Heart right ventricle (tissue), 16 donors: ENCODE measurements at regions of chr6 and their contacts with region 1.

Region 1: GRCh38 chr6:11172501-11173332 is 59.8 kb downstream of the NEDD9 start:
- DNase-seq: peak; percentile 65 to 73
- ATAC-seq: peak in 7 of 8 donors; percentile 44 to 85 (median 67)
- H3K4me3 ChIP-seq: peak overlapping the region in 1 of 10 donors; percentile 19
- H3K27ac ChIP-seq: peak overlapping the region in 1 of 10 donors; percentile 13
- H3K4me1 ChIP-seq: peaks cover 0 to 27% (median 9%) of the 10 kb centered on the region in 9 donors
- H3K27me3 ChIP-seq: no peaks in the 10 kb centered on the region
- CTCF ChIP-seq: peak; percentile 73 to 92 (median 86)

Region 2: DNA sequence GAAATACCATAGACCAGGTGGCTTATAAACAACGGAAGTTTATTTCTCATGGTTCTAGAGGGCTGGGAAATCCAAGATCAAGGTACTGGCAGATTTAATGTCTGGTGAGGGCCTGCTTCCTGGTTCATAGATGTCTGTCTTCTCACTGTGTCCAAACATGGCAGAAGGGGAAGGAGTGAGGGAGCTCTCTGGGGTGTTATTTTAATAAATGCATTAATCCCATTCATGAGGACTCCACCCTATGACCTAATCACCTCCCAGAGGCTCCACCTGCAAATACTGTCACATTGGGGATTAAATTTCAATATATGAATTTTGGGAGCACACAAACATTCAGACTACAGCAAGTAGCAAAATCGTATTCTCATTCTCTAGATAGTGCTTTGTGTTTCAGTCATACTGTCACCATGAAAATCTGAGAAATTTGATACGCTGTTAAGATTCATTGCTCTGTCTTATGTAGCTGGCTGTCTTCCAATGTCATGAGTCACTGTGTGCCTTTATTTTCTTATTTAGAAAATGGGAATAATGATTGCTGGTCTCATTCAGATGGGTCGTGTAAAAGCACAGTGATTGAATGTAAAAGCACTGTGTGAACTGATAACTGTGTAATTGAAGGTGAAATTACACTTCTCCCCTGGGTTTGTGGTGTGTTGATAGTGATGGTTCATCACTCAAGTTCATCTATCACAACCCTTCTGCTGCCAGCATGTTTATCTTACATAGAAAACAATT is 52.3 kb before region 1 on chr6:
- intact Hi-C with region 1: no loop called
- DNase-seq: no peak
- ATAC-seq: no peak
- H3K4me3 ChIP-seq: no peak overlapping the region
- H3K27ac ChIP-seq: no peak overlapping the region
- H3K4me1 ChIP-seq: peaks cover 0 to 34% (median 17%) of the 10 kb centered on the region in 9 donors
- H3K27me3 ChIP-seq: no peaks in the 10 kb centered on the region
- CTCF ChIP-seq: no peak

Region 3: GRCh38 chr6:11241793-11242201 is 69.1 kb after region 1 on chr6:
- intact Hi-C with region 1: loop called in 3 of 10 experiments (anchors 5 to 10 kb)
- DNase-seq: peak; percentile 67 to 73
- ATAC-seq: peak; percentile 80 to 95 (median 90)
- H3K4me3 ChIP-seq: no peak overlapping the region
- H3K27ac ChIP-seq: peak overlapping the region in 1 of 10 donors; percentile 4
- H3K4me1 ChIP-seq: peaks cover 0 to 27% (median 8%) of the 10 kb centered on the region in 9 donors
- H3K27me3 ChIP-seq: no peaks in the 10 kb centered on the region
- CTCF ChIP-seq: peak; percentile 26 to 77 (median 54)

Region 4: DNA sequence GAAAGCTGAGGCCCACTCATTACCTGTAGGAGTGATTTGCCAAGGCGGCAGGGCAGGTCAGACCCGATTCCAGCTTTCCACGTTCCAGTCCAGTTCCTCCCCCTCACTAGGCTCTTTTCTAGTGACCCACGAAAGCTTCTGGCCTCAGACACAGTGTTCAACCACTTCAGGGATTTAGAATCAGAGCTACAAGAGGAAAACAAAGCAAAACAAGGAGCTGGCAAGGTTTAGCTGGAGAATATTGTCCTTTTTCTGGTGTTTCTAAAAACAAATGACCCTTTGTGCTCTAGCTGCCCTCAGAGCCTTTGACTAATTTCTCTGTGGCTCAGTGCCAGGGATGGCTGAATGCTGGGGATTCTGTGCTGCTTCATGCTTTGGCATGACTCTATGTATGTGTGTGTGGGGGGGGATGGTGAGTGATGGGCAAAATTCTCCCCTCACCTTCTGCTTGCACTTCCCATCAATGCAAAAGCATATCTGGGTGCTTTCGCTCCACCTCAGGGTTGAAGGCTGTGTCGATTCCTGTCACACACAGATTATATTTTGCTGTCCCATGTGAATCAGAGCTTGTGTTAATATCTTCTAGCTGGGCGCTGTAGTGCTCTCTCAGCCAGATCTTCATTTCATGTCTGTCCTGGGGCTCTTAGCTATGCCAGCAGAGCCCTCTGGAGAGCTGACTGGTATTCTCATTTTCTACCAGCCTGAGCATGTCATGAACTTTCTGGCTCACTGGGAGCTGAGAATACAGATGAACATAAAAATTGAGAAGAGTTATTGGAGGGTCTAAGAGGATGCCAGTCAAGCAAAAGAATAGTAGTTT is 79.0 kb after region 1 on chr6:
- intact Hi-C with region 1: loop called in 1 of 10 experiments (anchors 5 kb)
- DNase-seq: peak; percentile 36 to 79
- ATAC-seq: peak; percentile 74 to 93 (median 87)
- H3K4me3 ChIP-seq: peak overlapping the region in 1 of 10 donors; percentile 1
- H3K27ac ChIP-seq: peak overlapping the region; percentile 43 to 79 (median 62)
- H3K4me1 ChIP-seq: peaks cover 11 to 28% (median 20%) of the 10 kb centered on the region in 9 donors
- H3K27me3 ChIP-seq: no peaks in the 10 kb centered on the region
- CTCF ChIP-seq: no peak

Region 5: GRCh38 chr6:11277275-11278206 is 104.8 kb after region 1 on chr6:
- intact Hi-C with region 1: no loop called
- DNase-seq: no peak
- ATAC-seq: peak in 7 of 8 donors; percentile 28 to 67 (median 48)
- H3K4me3 ChIP-seq: no peak overlapping the region
- H3K27ac ChIP-seq: peak overlapping the region in 5 of 10 donors; percentile 15 to 68 (median 27)
- H3K4me1 ChIP-seq: peaks cover 0 to 39% (median 0%) of the 10 kb centered on the region in 9 donors
- H3K27me3 ChIP-seq: no peaks in the 10 kb centered on the region
- CTCF ChIP-seq: no peak

Region 6: GRCh38 chr6:11330413-11330760 is 157.7 kb after region 1 on chr6:
- intact Hi-C with region 1: loop called in 1 of 10 experiments (anchors 10 kb)
- DNase-seq: no peak
- ATAC-seq: peak in 6 of 8 donors; percentile 29 to 62 (median 43)
- H3K4me3 ChIP-seq: no peak overlapping the region
- H3K27ac ChIP-seq: peak overlapping the region in 2 of 10 donors; percentile 11 to 64
- H3K4me1 ChIP-seq: peaks cover 0 to 25% (median 8%) of the 10 kb centered on the region in 9 donors
- H3K27me3 ChIP-seq: no peaks in the 10 kb centered on the region
- CTCF ChIP-seq: no peak